A673 (cell line): ENCODE measurements at regions of chrX and their contacts with region 1.

Region 1: DNA sequence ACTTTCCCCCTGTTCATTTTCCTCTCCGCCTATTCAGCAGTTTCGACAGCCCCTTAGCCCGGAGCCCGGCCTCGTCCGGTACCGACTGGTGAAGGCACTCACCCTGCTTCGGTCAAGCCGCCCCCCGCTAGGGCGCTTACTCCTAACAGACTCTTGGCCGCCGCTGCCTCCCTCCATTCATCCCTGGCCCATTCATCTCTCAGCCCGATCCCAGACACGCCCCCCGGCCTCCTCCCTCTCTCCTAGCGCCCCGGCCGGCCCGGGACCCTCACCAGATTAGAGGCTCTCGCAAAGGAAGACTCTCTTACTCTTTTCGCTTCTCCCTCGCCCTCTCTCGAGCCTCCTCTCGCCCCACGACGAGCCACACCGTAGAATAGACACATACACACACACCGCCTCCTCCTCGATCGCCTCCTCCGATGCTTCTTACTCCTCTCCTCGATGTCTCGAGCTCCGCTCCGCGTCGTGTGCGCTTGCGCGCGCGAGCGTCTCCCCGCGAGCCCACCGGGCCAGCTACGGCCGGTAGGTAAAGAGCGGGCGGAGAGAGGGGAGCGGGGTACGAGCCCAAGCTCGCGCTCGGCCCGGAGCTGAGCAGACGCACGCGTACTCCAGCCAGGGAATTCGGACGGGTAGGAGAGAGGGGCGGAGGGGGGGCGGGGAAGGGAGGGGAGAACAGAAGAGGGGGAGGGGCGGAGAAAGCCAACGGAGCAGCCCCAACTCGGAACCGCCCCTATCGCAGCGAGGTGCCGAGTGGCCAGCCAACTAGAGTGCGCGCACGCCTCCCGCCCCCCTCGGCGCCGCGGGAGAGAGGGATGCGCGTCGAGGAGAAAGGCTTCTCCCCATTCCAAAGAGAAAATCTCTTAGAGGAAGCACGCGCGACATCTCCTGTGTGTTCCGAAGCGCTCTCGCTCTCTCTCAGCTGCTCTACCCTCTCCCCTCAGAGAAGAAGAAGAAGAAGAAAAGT is at the start of gene WNK3:
- DNase-seq: peak; percentile 92
- H3K4me3 ChIP-seq: peak within 1 kb of the TSS; percentile 66
- H3K27ac ChIP-seq: peak within 1 kb of the TSS; percentile 91
- H3K4me1 ChIP-seq: no peaks in the 10 kb centered on the region
- H3K27me3 ChIP-seq: no peaks in the 10 kb centered on the region
- CTCF ChIP-seq: no peak
- total RNA-seq, gene WNK3: 9.8 and 12.8 TPM in 2 replicates

Region 2: GRCh38 chrX:54182864-54183608 is 174.7 kb before region 1 on chrX and contains the start of gene FAM120C:
- CTCF ChIA-PET with region 1: no interaction called
- POLR2A ChIA-PET with region 1: no interaction called
- intact Hi-C with region 1: loop called (anchors 5 kb)
- DNase-seq: peak; percentile 84
- H3K4me3 ChIP-seq: peak within 1 kb of the TSS; percentile 58
- H3K27ac ChIP-seq: peak within 1 kb of the TSS; percentile 80
- H3K4me1 ChIP-seq: peaks cover 7% of the 10 kb centered on the region
- H3K27me3 ChIP-seq: no peaks in the 10 kb centered on the region
- CTCF ChIP-seq: no peak
- total RNA-seq, gene FAM120C: 17.4 and 21.8 TPM in 2 replicates

Region 3: GRCh38 chrX:54325713-54326112 is 32.0 kb before region 1 on chrX:
- CTCF ChIA-PET with region 1: no interaction called
- POLR2A ChIA-PET with region 1: no interaction called
- intact Hi-C with region 1: no loop called
- DNase-seq: no peak
- H3K4me3 ChIP-seq: no peak overlapping the region
- H3K27ac ChIP-seq: no peak overlapping the region
- H3K4me1 ChIP-seq: no peaks in the 10 kb centered on the region
- H3K27me3 ChIP-seq: no peaks in the 10 kb centered on the region
- CTCF ChIP-seq: no peak

Region 4: GRCh38 chrX:54839282-54839681 is 481.6 kb after region 1 on chrX:
- CTCF ChIA-PET with region 1: no interaction called
- POLR2A ChIA-PET with region 1: no interaction called
- intact Hi-C with region 1: no loop called
- DNase-seq: no peak
- H3K4me3 ChIP-seq: no peak overlapping the region
- H3K27ac ChIP-seq: no peak overlapping the region
- H3K4me1 ChIP-seq: no peaks in the 10 kb centered on the region
- H3K27me3 ChIP-seq: no peaks in the 10 kb centered on the region
- CTCF ChIP-seq: no peak